ENCODE measurements at regions of chr16 and their contacts with region 1.

Region 1: DNA sequence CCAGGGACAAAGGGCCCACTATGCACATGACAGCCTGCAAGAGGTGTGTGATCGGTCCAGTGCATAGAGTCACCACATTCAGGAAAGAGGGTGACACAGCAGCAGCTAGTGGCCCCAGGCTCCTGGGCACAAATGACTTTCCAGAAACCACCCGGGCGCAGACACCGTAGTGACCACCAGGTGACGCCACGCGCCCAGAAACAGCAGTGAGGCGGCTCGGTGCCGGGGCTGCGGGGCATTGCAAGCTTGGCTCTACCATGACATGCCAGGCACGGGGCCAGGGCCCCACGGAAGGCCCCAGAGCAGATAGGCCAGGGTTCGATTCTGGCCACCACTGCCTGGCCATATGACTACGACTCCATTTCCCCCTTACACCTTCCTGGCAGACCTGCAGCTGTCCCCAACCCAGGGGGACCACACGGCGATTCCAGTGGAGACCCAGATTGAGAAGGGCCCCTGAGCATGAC is 6.7 kb downstream of the RHBDF1 start:
- DNase-seq: peak; percentile 74
- ATAC-seq: peak; percentile 80
- H3K4me3 ChIP-seq: no peak overlapping the region
- H3K27ac ChIP-seq: no peak overlapping the region
- H3K4me1 ChIP-seq: peaks cover 14% of the 10 kb centered on the region
- H3K27me3 ChIP-seq: no peaks in the 10 kb centered on the region
- CTCF ChIP-seq: peak; percentile 89

Region 2: GRCh38 chr16:96935-97381 is 31.3 kb after region 1 on chr16:
- CTCF ChIA-PET with region 1: interaction called, 14 read pairs
- POLR2A ChIA-PET with region 1: no interaction called
- intact Hi-C with region 1: loop called (anchors 1 kb)
- DNase-seq: peak; percentile 87
- ATAC-seq: peak; percentile 69
- H3K4me3 ChIP-seq: no peak overlapping the region
- H3K27ac ChIP-seq: no peak overlapping the region
- H3K4me1 ChIP-seq: no peaks in the 10 kb centered on the region
- H3K27me3 ChIP-seq: no peaks in the 10 kb centered on the region
- CTCF ChIP-seq: peak; percentile 97

Region 3: DNA sequence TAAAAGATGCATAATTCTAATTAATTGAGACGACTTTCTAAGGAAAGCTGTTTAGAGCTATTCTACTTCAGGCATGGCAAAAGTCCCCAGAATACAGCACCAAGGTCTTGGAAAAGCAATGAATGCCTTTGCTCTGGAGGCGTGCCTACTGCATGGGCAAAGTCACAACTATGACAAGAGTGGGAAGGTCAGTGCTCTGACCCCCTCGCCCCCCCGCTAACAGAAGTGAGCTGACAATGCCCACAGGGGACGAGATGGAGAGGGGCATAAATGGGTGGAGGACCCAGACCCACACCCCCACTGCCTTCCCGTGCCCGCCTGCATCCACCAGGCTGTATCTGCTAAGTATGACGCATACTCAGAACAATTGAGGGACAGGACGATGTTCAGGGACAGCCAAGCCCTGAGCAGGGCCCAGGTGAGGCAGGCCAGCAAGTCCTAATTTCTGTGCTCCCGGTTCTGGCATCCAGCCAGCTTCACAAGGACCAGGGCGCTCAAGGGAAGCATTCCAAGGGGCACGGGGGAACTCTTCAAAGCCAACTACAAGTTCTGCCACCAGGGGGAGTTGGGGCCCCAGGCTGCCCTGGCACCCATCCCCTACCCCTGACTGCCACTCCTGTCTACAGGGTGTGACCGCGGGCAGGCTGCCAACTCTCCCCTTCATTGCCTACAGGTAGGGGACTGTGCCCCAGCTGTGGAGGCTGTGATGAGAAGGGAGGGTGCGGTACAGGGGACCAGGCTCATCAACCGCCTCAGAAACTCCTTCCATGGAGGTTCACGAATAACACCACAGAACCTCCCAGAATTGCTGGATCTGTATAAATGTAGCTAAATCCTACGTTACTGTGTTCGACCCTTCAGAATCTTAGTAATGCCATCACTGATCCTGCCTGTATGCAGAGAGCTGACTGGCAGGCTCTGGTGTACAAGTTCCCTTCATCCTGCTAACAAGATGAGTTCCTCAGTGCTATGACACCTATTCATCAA is 52.0 kb after region 1 on chr16:
- CTCF ChIA-PET with region 1: no interaction called
- POLR2A ChIA-PET with region 1: no interaction called
- intact Hi-C with region 1: no loop called
- DNase-seq: peak; percentile 59
- ATAC-seq: peak; percentile 56
- H3K4me3 ChIP-seq: no peak overlapping the region
- H3K27ac ChIP-seq: no peak overlapping the region
- H3K4me1 ChIP-seq: peaks cover 15% of the 10 kb centered on the region
- H3K27me3 ChIP-seq: no peaks in the 10 kb centered on the region
- CTCF ChIP-seq: peak; percentile 73

Region 4: GRCh38 chr16:200388-200787 is 134.7 kb after region 1 on chr16:
- CTCF ChIA-PET with region 1: no interaction called
- POLR2A ChIA-PET with region 1: no interaction called
- intact Hi-C with region 1: no loop called
- DNase-seq: peak; percentile 16
- ATAC-seq: peak; percentile 50
- H3K4me3 ChIP-seq: no peak overlapping the region
- H3K27ac ChIP-seq: no peak overlapping the region
- H3K4me1 ChIP-seq: no peaks in the 10 kb centered on the region
- H3K27me3 ChIP-seq: no peaks in the 10 kb centered on the region
- CTCF ChIP-seq: no peak